Activated CD4-positive, alpha-beta T cell treated with anti-CD3 and anti-CD28 coated beads for 36 hours (primary cell): ENCODE measurements at regions of chr6 and their contacts with region 1.

Region 1: GRCh38 chr6:26122793-26123674 is 35.8 kb downstream of the HFE start:
- DNase-seq: peak; percentile 95
- ATAC-seq: peak; percentile 57
- H3K4me3 Mint-ChIP-seq: peak overlapping the region; percentile 82
- H3K27ac Mint-ChIP-seq: peak overlapping the region; percentile 100
- H3K4me1 Mint-ChIP-seq: peaks cover 34% of the 10 kb centered on the region
- H3K27me3 Mint-ChIP-seq: peaks cover 3% of the 10 kb centered on the region

Region 2: DNA sequence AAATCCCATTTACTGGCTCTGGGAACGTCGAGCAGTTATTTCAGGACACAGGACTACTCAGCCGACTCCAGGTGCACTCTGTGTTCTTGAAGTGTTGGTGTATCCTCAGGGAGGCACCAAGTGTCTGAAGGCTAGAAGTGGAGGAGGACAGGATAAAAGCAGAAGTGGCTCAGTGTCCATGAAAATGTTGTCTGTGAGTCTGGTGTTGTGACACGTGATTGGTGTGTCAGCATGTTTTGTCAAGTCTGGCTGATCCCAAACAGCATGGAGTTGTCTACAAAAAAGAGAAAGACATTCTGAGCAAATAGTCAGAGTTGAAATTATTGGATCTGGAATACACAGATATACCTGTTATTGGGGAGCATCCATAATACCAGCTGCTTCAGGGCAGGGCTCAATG is 440.7 kb before region 1 on chr6:
- CTCF ChIA-PET with region 1: no interaction called
- POLR2A ChIA-PET with region 1: no interaction called
- intact Hi-C with region 1: no loop called
- DNase-seq: no peak
- ATAC-seq: no peak
- H3K4me3 Mint-ChIP-seq: no peak overlapping the region
- H3K27ac Mint-ChIP-seq: no peak overlapping the region
- H3K4me1 Mint-ChIP-seq: no peaks in the 10 kb centered on the region
- H3K27me3 Mint-ChIP-seq: peaks cover 23% of the 10 kb centered on the region

Region 3: GRCh38 chr6:26025894-26026832 is 96.9 kb before region 1 on chr6:
- CTCF ChIA-PET with region 1: interaction called, 5 read pairs
- POLR2A ChIA-PET with region 1: interaction called, 67 read pairs
- intact Hi-C with region 1: loop called in 1 of 2 experiments (anchors 1 kb)
- DNase-seq: peak; percentile 96
- ATAC-seq: peak; percentile 39
- H3K4me3 Mint-ChIP-seq: peak overlapping the region; percentile 81
- H3K27ac Mint-ChIP-seq: peak overlapping the region; percentile 98
- H3K4me1 Mint-ChIP-seq: peaks cover 51% of the 10 kb centered on the region
- H3K27me3 Mint-ChIP-seq: no peaks in the 10 kb centered on the region

Region 4: DNA sequence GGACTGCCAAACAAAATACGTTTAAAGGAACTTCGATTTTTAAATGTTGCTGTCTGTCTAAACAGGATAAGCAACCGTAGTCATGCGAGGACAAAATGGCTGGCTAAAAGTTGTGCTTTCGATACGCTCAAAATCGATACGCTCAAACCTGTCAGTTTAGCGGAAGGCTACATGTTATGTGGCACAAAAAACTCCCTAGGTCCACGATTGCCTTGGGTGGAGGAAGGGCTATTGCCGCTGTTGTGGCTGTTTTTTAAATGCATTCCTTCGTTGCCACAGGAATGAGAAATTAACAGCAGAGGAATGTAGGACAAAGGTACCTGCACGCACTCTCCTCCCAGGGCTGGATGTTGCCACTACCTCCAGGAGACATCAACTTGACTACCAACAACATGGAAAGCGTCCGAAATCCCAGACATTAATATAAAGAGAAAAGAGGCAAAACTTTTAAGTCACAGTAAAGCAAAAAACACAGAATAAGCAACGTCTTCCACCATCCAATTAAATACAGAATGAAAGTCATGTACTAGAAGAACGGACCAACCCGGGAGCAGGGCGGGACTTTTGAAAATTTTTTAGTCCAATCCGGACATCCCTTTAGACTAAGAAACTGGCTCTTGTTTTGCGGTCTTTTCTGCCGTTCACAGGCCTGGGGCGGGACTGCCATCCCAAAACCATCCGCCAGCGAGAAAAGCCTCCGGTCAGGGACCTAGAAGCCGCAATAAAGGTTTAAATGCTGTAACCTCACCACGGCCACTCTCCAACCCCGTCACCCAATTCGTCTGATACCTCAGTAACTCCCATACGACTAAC is 68.0 kb before region 1 on chr6:
- CTCF ChIA-PET with region 1: interaction called, 3 read pairs
- POLR2A ChIA-PET with region 1: interaction called, 63 read pairs
- intact Hi-C with region 1: loop called (anchors 1 kb)
- DNase-seq: peak; percentile 91
- ATAC-seq: peak; percentile 70
- H3K4me3 Mint-ChIP-seq: peak overlapping the region; percentile 96
- H3K27ac Mint-ChIP-seq: peak overlapping the region; percentile 99
- H3K4me1 Mint-ChIP-seq: peaks cover 13% of the 10 kb centered on the region
- H3K27me3 Mint-ChIP-seq: no peaks in the 10 kb centered on the region

Region 5: DNA sequence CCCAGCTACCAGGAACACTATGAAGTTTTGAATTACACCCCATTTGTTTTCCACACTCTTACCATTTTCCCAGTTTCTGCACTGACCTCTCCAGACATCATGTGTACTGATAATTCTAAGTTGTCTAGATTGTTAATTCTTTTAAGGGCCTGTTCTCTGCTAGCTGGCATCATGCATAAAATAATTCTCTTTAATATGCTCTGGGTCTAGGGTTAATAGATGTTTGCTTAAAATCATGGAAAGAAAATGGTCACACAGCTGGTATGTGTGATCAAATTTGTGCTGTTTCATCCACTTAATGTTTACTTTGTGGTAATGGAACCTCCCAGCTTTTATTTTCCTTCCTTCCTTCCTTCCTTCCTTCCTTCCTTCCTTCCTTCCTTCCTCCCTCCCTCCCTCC is 13.3 kb after region 1 on chr6:
- CTCF ChIA-PET with region 1: interaction called, 13 read pairs
- POLR2A ChIA-PET with region 1: interaction called, 11 read pairs
- intact Hi-C with region 1: no loop called
- DNase-seq: no peak
- ATAC-seq: no peak
- H3K4me3 Mint-ChIP-seq: no peak overlapping the region
- H3K27ac Mint-ChIP-seq: no peak overlapping the region
- H3K4me1 Mint-ChIP-seq: peaks cover 19% of the 10 kb centered on the region
- H3K27me3 Mint-ChIP-seq: no peaks in the 10 kb centered on the region

Region 6: DNA sequence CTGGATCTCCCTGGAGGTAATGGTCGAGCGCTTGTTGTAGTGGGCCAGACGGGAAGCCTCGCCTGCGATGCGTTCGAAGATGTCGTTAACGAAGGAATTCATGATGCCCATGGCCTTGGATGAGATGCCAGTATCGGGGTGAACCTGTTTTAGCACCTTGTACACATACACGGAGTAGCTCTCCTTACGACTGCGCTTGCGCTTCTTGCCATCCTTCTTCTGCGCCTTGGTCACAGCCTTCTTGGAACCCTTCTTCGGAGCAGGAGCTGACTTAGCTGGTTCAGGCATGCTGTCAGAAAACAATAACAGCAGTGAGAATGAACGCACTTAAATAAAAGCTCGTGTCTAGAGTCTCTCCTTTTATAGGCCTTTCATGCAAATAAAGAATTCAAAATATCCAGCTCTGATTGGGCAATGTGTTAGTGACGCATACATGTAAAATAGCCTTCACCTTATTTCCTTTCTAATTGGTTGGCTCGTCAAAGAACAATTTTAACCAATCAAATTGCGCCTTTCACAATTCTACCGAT is 93.4 kb after region 1 on chr6:
- CTCF ChIA-PET with region 1: no interaction called
- POLR2A ChIA-PET with region 1: interaction called, 51 read pairs
- intact Hi-C with region 1: loop called (anchors 1 kb)
- DNase-seq: peak; percentile 88
- ATAC-seq: peak; percentile 76
- H3K4me3 Mint-ChIP-seq: no peak overlapping the region
- H3K27ac Mint-ChIP-seq: no peak overlapping the region
- H3K4me1 Mint-ChIP-seq: peaks cover 2% of the 10 kb centered on the region
- H3K27me3 Mint-ChIP-seq: no peaks in the 10 kb centered on the region

Region 7: GRCh38 chr6:26285143-26286134 is 162.4 kb after region 1 on chr6:
- CTCF ChIA-PET with region 1: no interaction called
- POLR2A ChIA-PET with region 1: interaction called, 3 read pairs
- intact Hi-C with region 1: loop called in 1 of 2 experiments (anchors 5 kb)
- DNase-seq: peak; percentile 98
- ATAC-seq: peak; percentile 80
- H3K4me3 Mint-ChIP-seq: peak overlapping the region; percentile 88
- H3K27ac Mint-ChIP-seq: peak overlapping the region; percentile 99
- H3K4me1 Mint-ChIP-seq: peaks cover 14% of the 10 kb centered on the region
- H3K27me3 Mint-ChIP-seq: peaks cover 3% of the 10 kb centered on the region

Region 8: DNA sequence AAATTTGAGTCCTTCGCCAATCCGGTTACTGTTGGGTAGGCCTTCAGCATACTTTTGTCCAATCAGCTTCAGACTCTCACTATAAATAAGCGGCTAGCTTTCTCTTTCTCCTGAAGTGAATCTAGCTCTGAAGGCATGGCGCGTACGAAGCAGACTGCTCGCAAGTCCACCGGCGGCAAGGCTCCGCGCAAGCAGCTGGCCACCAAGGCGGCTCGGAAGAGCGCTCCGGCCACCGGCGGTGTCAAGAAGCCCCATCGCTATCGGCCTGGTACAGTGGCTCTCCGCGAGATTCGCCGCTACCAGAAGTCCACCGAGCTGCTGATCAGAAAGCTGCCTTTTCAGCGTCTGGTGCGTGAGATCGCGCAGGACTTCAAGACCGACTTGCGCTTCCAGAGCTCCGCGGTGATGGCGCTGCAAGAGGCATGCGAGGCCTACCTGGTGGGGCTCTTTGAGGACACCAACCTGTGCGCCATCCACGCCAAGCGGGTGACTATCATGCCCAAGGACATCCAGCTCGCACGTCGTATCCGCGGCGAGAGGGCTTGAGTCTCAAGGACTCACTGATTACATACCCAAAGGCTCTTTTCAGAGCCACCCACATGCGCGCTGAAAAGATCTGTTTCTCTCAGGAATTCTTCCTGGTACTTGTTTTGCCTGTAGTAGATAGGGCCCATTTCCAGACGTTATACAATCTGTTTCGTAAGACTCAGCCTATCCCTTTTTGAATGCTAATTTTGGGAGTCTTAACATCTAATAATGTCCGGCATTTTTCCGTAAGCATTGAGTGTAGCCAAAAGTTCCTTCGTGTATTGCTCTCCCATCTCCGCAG is 1687.1 kb after region 1 on chr6:
- CTCF ChIA-PET with region 1: no interaction called
- POLR2A ChIA-PET with region 1: interaction called, 5 read pairs
- intact Hi-C with region 1: loop called in 1 of 2 experiments (anchors 5 kb)
- DNase-seq: peak; percentile 83
- ATAC-seq: peak; percentile 33
- H3K4me3 Mint-ChIP-seq: peak overlapping the region; percentile 86
- H3K27ac Mint-ChIP-seq: peak overlapping the region; percentile 95
- H3K4me1 Mint-ChIP-seq: peaks cover 49% of the 10 kb centered on the region
- H3K27me3 Mint-ChIP-seq: no peaks in the 10 kb centered on the region